Activated CD4-positive, alpha-beta memory T cell treated with anti-CD3 and anti-CD28 coated beads, Interleukin-2, amount 10 ng/mL, durations not matched to agents 7 days and 5 days (primary cell): ENCODE measurements at regions of chr2 and their contacts with region 1.

Region 1: DNA sequence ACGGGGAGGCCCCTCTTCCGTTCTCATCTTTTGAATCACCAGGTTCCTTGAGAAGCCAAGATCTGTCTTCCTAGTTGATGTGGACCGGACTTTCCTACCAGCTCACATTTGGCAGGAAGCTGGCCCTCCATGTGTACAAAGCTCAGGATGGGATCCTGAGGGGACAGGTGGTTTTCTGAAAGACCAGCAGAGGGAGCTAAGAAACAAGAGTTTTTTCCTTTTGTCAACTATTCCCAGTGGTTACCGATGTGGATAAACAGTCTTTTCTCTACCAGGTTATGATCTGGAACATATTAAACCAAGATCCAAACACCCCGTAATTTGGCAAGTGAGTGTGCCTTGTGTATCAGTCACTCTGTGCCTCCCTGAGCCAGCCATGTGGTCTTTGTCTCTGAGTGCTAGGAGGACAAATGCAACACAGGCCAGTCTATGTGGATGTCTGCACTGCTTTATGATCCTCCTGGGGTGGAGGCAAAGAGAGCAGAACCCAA is 25.1 kb upstream of the ARHGAP25 start:
- DNase-seq: no peak
- H3K4me3 Mint-ChIP-seq: no peak overlapping the region
- H3K27ac Mint-ChIP-seq: no peak overlapping the region
- H3K4me1 Mint-ChIP-seq: peaks cover 36% of the 10 kb centered on the region
- H3K27me3 Mint-ChIP-seq: peaks cover 8% of the 10 kb centered on the region

Region 2: DNA sequence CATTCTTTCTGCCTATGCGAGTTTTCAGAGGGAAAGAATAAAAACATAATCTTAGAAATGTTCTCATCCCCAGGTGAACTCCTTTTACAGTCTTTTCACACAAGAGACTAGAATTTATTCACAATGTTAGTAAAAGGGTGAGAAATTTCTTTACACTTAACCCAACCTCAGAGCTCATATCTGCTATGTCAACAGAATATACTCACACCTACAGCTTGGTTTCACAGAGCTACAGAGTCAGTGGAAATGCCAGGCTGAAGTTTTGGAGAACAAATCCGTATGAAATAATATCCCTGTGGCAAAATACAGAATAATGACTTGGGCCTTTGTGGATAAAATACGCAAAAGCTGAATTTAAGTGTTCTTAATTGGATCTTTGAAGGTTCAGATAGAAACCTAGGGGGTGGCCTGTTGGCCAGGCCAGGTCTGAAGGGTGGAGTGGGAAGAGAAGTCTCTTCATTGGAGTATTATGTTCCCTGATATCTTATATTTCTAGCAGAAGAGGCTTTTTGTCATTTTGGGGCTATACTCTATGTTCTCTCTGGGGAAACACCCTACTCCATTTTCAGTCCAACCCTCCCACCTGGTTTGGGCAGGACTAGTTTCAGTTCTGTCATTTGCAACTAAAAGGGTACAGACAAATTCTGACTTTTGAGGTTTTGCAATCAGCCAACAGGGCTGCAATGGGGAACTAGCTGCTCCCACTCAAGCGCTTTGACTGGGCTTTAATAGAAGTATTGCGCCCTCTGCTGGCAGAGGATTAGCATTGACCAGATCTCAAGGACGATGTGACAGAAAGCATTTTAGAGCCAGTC is 268.1 kb before region 1 on chr2:
- CTCF ChIA-PET with region 1: no interaction called
- POLR2A ChIA-PET with region 1: no interaction called
- DNase-seq: peak; percentile 84
- H3K4me3 Mint-ChIP-seq: no peak overlapping the region
- H3K27ac Mint-ChIP-seq: peak overlapping the region; percentile 7
- H3K4me1 Mint-ChIP-seq: peaks cover 16% of the 10 kb centered on the region
- H3K27me3 Mint-ChIP-seq: peaks cover 10% of the 10 kb centered on the region

Region 3: DNA sequence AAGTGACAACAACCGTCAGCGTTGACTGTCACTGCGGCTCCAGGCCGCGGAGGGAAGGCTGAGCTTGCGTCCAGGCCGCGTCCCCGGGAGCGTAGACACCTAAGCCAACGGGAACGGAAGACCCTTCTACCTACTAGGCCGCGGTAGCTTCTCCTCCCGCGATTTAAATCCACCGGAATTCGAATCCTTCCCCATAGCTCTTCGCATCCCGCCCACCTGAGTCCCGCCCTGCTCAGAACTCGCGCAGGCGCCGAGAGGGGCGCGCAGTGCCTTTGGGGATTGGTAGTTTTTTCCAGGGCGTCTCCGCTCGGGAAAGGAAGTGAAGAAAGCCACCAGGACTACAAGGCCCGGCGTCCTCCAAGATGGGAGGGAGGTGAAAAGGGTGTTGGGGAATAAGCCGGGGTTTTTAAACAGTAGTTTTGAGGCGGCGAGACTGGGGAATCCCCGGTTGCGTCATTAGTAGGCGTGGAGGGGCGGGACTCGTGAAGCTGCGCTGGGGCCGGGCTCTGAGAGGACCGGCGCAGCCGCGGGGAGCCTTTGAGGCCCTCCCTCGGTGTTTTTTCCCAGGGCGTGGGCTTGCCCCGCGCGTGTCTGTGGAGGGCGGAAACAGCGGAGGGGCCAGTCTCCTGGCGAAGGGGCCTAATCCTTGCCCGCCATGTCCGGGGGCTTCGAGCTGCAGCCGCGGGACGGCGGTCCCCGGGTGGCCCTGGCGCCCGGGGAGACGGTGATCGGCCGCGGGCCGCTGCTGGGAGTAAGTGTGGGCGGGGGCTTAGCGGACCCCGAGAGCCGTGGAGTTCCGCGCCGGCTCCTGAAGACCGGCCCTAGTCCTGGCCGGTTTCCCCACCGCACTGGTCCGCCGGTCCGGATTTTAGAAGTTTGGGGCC is 242.1 kb before region 1 on chr2 and contains the starts of genes APLF and FBXO48:
- CTCF ChIA-PET with region 1: interaction called, 23 read pairs
- POLR2A ChIA-PET with region 1: interaction called, 5 read pairs
- DNase-seq: peak; percentile 98
- H3K4me3 Mint-ChIP-seq: peak within 1 kb of the TSS; percentile 96
- H3K27ac Mint-ChIP-seq: peak within 1 kb of the TSS; percentile 95
- H3K4me1 Mint-ChIP-seq: peaks cover 47% of the 10 kb centered on the region
- H3K27me3 Mint-ChIP-seq: no peaks in the 10 kb centered on the region
- total RNA-seq, gene APLF: 2.8 to 3.6 TPM
- total RNA-seq, gene FBXO48: 5.0 to 5.4 TPM

Region 4: DNA sequence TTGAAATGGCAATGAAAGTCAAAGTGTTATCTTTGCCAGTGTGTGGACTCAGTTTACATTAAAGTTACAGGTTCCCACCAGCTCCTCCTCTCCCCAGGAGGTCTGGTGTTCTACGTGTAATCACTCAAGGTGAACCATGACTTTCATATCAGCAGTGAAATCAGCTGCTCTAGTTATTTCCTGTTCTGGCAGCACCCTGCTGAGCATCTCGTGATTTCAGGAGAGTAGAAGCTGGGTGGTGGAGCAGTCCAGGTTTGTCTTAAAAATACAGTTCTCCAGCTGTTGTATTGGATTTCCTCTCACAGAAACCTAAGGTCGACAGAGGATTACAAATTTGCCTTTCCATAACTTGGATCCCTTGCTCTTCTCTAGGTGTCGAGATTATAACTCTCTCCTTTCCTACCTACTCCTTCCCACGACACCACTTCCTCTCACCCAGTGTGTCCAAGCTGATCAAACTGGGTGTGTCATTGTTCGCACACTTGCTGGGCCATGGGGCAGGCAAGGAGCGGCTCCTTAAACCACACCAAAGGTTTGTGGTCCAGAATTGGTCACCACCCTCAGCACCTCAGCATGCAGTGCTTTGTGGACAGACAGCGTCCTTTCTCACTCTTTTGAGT is 12.1 kb after region 1 on chr2:
- CTCF ChIA-PET with region 1: interaction called, 33 read pairs
- POLR2A ChIA-PET with region 1: interaction called, 3 read pairs
- DNase-seq: peak; percentile 67
- H3K4me3 Mint-ChIP-seq: peak overlapping the region; percentile 58
- H3K27ac Mint-ChIP-seq: peak overlapping the region; percentile 95
- H3K4me1 Mint-ChIP-seq: peaks cover 99% of the 10 kb centered on the region
- H3K27me3 Mint-ChIP-seq: no peaks in the 10 kb centered on the region

Region 5: GRCh38 chr2:68742626-68743415 is 33.4 kb after region 1 on chr2:
- CTCF ChIA-PET with region 1: interaction called, 40 read pairs
- POLR2A ChIA-PET with region 1: interaction called, 491 read pairs
- DNase-seq: peak; percentile 18
- H3K4me3 Mint-ChIP-seq: peak overlapping the region; percentile 52
- H3K27ac Mint-ChIP-seq: peak overlapping the region; percentile 68
- H3K4me1 Mint-ChIP-seq: peaks cover 92% of the 10 kb centered on the region
- H3K27me3 Mint-ChIP-seq: no peaks in the 10 kb centered on the region

Region 6: DNA sequence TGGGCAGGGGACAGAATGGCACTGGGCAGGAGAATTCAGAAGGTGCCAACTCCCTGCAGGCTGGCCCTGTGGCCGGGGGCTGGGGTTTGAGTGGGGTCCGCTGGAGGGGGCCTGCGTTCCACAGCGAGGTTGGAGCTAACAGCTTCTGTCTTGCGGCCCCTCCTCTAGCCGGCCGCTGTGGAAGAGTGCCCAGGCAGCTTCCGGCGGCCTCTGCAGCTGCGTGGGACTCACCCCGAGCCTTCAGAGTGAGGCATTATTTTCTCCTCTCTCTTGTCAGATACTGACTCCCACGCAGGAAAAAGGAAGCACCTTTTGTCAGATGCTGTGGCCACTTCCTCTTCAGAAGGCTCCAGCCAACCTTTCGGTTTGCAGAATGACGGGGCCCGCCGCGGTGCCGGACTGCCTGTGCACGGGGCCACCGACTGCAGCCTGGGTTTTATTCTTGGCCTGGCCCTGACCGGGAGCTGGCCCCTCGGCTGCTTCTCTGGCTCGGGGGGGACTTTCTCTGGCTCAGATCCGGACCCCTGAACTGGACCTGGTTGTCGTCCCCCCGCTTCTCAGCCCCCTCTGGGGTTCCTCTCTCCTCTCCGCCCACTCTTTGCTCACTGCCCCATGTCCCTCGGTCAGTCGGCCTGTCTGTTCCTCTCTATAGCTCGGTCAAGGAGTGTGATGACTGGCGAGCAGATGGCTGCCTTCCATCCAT is 65.3 kb after region 1 on chr2:
- CTCF ChIA-PET with region 1: interaction called, 13 read pairs
- POLR2A ChIA-PET with region 1: no interaction called
- DNase-seq: peak; percentile 77
- H3K4me3 Mint-ChIP-seq: peak overlapping the region; percentile 80
- H3K27ac Mint-ChIP-seq: peak overlapping the region; percentile 97
- H3K4me1 Mint-ChIP-seq: peaks cover 87% of the 10 kb centered on the region
- H3K27me3 Mint-ChIP-seq: no peaks in the 10 kb centered on the region

Region 7: GRCh38 chr2:68925295-68925896 is 215.9 kb after region 1 on chr2:
- CTCF ChIA-PET with region 1: interaction called, 73 read pairs
- POLR2A ChIA-PET with region 1: interaction called, 5 read pairs
- DNase-seq: peak; percentile 64
- H3K4me3 Mint-ChIP-seq: no peak overlapping the region
- H3K27ac Mint-ChIP-seq: no peak overlapping the region
- H3K4me1 Mint-ChIP-seq: peaks cover 9% of the 10 kb centered on the region
- H3K27me3 Mint-ChIP-seq: peaks cover 24% of the 10 kb centered on the region